Activated CD8-positive, alpha-beta T cell treated with anti-CD3 and anti-CD28 coated beads for 36 hours (primary cell): ENCODE measurements at regions of chr14 and their contacts with region 1.

Region 1: GRCh38 chr14:69726761-69727511 is 40.0 kb upstream of the SRSF5 start:
- DNase-seq: peak; percentile 82
- ATAC-seq: peak; percentile 86
- H3K4me3 Mint-ChIP-seq: peak overlapping the region; percentile 51
- H3K27ac Mint-ChIP-seq: peak overlapping the region; percentile 40
- H3K4me1 Mint-ChIP-seq: peaks cover 10% of the 10 kb centered on the region
- H3K27me3 Mint-ChIP-seq: peaks cover 4% of the 10 kb centered on the region
- CTCF ChIP-seq: peak; percentile 97

Region 2: DNA sequence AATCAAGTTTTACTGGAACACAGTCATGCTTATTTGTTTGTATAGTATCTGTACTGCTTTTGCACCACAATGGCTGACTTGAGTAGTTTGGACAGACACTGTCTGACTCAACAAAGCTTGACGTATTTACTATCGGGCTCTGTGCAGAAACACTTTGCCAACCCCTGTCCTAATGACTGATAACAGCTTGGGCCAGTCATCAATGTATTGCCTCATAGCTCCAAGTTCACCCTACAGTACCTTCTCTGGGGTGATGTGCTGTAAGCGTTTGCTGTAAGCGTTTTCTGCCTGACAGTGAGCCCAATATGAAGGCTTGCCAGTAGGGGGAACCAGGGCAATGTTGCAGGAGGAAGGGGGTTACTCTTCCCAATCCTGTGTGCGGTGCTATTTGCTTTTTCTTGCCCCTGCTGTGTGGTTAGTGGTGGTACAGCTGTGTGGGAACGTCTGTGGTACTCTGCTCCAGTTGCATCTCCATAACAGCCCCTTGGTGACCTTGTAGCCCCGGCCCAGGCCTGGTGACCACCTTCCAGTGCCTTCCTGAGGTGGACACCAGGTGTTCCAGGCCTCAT is 146.8 kb before region 1 on chr14:
- CTCF ChIA-PET with region 1: interaction called, 44 read pairs
- POLR2A ChIA-PET with region 1: no interaction called
- intact Hi-C with region 1: loop called (anchors 2 kb)
- DNase-seq: peak; percentile 29
- ATAC-seq: peak; percentile 39
- H3K4me3 Mint-ChIP-seq: no peak overlapping the region
- H3K27ac Mint-ChIP-seq: no peak overlapping the region
- H3K4me1 Mint-ChIP-seq: no peaks in the 10 kb centered on the region
- H3K27me3 Mint-ChIP-seq: peaks cover 15% of the 10 kb centered on the region
- CTCF ChIP-seq: peak; percentile 31

Region 3: DNA sequence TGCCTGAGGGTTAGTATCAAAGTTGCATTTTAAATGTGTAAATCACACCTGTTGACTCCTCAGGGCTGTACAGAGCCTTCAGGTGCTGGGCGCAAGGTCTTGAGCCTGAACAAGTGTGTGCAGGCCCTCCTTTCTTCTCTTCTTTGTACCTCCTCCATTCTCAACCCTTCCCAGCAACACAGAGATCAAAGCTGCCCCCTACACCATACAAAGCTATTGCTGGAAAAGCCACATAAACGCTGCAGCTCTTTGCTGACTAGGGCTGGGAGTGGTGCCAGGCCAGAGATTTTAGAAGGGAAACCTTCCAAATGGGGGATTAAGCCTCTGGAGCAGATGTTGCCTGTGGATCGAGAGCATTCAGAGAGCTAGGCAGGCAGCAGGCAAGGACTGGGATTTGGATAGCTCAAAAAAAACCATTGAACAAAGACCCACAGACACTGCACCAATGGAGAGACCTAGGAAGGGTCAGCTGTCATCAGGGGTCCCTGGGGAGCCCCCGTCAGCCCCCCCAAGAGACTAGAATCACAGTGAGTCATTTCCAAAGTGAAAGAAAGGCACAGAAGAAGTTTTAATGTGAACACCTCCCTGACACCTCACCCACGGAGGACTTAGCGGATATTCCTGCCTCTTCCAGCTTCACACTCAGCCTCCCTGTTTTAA is 133.8 kb before region 1 on chr14:
- CTCF ChIA-PET with region 1: interaction called, 13 read pairs
- POLR2A ChIA-PET with region 1: no interaction called
- intact Hi-C with region 1: no loop called
- DNase-seq: no peak
- ATAC-seq: no peak
- H3K4me3 Mint-ChIP-seq: no peak overlapping the region
- H3K27ac Mint-ChIP-seq: no peak overlapping the region
- H3K4me1 Mint-ChIP-seq: no peaks in the 10 kb centered on the region
- H3K27me3 Mint-ChIP-seq: no peaks in the 10 kb centered on the region
- CTCF ChIP-seq: no peak

Region 4: DNA sequence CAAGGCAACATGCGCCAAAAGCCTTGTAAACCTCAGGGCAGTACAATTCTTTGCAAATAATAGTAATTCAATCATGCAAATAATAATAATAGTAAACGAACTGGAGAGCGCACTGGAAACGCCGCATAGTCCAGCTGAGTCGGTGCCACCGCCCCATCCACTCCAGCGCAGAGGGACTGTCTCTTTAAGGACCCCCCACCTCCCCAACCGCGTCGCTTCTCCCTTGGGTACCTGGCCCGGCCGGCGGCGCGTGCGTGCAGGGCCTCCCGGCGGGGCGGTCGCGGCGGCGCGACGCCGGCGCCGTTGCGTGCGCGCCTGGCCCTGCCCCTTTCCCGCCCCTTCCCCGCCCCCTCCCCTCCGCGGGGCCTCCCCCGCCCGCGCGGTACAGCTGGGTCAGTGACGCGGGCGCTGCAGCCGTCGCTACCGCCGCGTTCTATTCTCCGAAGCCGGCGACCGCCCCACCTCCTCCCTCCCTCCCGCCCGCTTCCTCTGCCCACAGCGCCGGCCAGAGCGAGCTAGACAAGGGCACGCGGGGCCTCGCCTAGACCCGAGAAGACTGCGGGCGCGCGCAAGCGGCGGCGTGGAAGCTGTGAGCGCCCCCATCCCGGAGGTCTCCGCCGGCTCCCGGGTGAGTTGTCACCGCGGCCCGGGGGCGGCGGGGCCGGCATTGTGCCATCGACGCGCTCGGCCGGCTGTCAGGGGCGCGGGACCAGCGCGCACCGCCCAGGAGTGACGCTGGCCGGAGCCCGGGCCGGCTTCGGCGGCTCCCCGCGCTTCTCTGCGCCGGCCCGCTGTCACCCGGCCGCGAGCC is 115.5 kb before region 1 on chr14 and contains the start of gene SUSD6:
- CTCF ChIA-PET with region 1: interaction called, 61 read pairs
- POLR2A ChIA-PET with region 1: interaction called, 5 read pairs
- intact Hi-C with region 1: no loop called
- DNase-seq: peak; percentile 90
- ATAC-seq: peak; percentile 82
- H3K4me3 Mint-ChIP-seq: peak within 1 kb of the TSS; percentile 96
- H3K27ac Mint-ChIP-seq: peak within 1 kb of the TSS; percentile 92
- H3K4me1 Mint-ChIP-seq: peaks cover 48% of the 10 kb centered on the region
- H3K27me3 Mint-ChIP-seq: no peaks in the 10 kb centered on the region
- CTCF ChIP-seq: no peak
- total RNA-seq, gene SUSD6: 35.7 to 36.2 TPM

Region 5: GRCh38 chr14:69703047-69704039 is 23.6 kb before region 1 on chr14:
- CTCF ChIA-PET with region 1: interaction called, 10 read pairs
- POLR2A ChIA-PET with region 1: no interaction called
- intact Hi-C with region 1: no loop called
- DNase-seq: no peak
- ATAC-seq: no peak
- H3K4me3 Mint-ChIP-seq: no peak overlapping the region
- H3K27ac Mint-ChIP-seq: peak overlapping the region; percentile 46
- H3K4me1 Mint-ChIP-seq: peaks cover 51% of the 10 kb centered on the region
- H3K27me3 Mint-ChIP-seq: no peaks in the 10 kb centered on the region
- CTCF ChIP-seq: no peak

Region 6: DNA sequence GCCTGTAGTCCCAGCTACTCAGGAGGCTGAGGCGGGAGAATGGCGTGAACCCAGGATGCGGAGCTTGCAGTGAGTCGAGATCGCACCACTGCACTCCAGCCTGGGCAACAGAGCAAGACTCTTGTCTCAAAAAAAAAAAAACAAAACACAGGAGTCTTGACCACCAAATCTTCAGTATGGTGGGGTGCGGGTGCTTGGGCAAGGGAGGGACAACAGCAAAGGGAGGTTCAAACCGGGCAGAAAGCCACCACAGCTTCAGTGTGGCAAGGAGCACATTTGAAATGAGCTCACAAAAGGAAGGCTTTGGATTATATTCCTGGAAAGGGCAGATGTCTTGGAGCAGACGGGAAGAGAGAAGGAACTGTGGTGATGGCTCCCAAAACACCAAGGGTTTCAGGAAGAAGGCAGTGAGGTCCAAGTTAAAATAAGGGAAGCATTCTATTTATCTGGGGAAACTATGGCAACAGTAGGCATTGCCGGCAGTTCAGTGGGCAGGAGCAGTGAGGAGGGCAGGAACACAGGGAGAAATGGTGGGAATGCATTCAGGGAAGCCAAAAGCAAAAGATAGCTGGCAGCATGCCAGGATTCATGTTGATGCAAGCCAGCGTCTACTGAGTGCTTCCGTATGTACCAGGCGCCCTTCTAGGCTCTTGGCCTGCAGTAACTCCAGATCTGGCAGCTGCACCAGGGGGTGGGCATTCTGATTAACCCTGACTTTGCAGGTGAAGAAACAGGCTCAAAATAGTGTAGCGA is 11.0 kb before region 1 on chr14:
- CTCF ChIA-PET with region 1: interaction called, 21 read pairs
- POLR2A ChIA-PET with region 1: no interaction called
- intact Hi-C with region 1: no loop called
- DNase-seq: no peak
- ATAC-seq: peak; percentile 25
- H3K4me3 Mint-ChIP-seq: no peak overlapping the region
- H3K27ac Mint-ChIP-seq: peak overlapping the region; percentile 73
- H3K4me1 Mint-ChIP-seq: peaks cover 32% of the 10 kb centered on the region
- H3K27me3 Mint-ChIP-seq: no peaks in the 10 kb centered on the region
- CTCF ChIP-seq: no peak

Region 7: GRCh38 chr14:70027785-70028428 is 301.0 kb after region 1 on chr14:
- CTCF ChIA-PET with region 1: interaction called, 13 read pairs
- POLR2A ChIA-PET with region 1: no interaction called
- intact Hi-C with region 1: no loop called
- DNase-seq: peak; percentile 81
- ATAC-seq: peak; percentile 89
- H3K4me3 Mint-ChIP-seq: no peak overlapping the region
- H3K27ac Mint-ChIP-seq: no peak overlapping the region
- H3K4me1 Mint-ChIP-seq: no peaks in the 10 kb centered on the region
- H3K27me3 Mint-ChIP-seq: peaks cover 2% of the 10 kb centered on the region
- CTCF ChIP-seq: peak; percentile 97